Dorsolateral prefrontal cortex (tissue), 120 donors: ENCODE measurements at regions of chr17 and their contacts with region 1.

Region 1: DNA sequence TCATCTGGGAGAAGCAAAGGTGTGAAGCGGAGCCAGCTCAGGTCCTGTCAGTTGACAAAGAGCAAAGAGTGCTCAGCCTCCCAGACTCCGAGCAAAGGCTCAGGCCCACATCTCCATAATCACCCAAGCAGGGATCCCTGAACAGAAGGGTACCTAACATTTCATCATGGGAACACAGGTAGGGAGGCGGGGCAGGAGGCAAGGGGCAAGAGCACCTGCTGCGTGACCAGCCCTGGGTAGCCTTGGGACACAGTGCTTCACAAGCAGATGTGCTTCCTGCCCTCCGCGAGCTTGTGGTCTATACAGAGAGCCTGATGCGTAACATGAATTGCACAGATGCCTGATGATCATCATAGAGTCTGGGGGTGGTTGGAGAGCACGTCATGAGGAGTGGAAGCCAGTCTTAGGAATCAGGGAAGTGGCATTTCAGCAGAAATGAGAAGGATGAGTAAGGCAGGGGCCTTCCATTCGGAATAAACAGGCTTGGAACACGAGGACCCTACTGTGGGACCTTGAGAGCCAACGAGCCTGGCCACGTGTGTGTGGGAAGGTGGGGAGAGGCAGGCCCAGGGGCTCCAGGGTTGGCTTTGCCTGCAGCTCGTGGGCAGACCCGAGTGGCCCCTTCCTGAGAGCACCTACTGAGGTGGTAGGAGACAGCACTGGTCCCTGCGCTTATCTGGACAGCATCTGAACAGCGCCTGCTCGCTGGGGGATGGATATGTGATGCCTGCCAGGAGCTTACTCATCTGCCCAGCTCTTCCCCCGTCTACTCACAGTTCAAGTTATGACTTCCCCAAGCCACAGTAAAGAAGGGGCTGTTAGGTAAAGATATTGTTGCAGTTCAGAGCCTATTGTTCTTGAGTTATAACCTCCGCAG is 125.8 kb downstream of the CCDC182 start:
- DNase-seq: peak in 1 of 10 donors; percentile 13
- H3K4me3 ChIP-seq: no peak overlapping the region
- H3K27ac ChIP-seq: no peak overlapping the region
- H3K27me3 ChIP-seq: no peaks in the 10 kb centered on the region
- CTCF ChIP-seq: no peak

Region 2: GRCh38 chr17:57649731-57650484 is 30.6 kb after region 1 on chr17:
- intact Hi-C with region 1: loop called in 1 of 2 experiments (anchors 5 kb)
- DNase-seq: no peak
- H3K4me3 ChIP-seq: no peak overlapping the region
- H3K27ac ChIP-seq: peak overlapping the region in 6 of 59 donors; percentile 4 to 61 (median 25)
- H3K27me3 ChIP-seq: no peaks in the 10 kb centered on the region
- CTCF ChIP-seq: no peak